Head of caudate nucleus (tissue), 42 donors: ENCODE measurements at regions of chr5 and their contacts with region 1.

Region 1: DNA sequence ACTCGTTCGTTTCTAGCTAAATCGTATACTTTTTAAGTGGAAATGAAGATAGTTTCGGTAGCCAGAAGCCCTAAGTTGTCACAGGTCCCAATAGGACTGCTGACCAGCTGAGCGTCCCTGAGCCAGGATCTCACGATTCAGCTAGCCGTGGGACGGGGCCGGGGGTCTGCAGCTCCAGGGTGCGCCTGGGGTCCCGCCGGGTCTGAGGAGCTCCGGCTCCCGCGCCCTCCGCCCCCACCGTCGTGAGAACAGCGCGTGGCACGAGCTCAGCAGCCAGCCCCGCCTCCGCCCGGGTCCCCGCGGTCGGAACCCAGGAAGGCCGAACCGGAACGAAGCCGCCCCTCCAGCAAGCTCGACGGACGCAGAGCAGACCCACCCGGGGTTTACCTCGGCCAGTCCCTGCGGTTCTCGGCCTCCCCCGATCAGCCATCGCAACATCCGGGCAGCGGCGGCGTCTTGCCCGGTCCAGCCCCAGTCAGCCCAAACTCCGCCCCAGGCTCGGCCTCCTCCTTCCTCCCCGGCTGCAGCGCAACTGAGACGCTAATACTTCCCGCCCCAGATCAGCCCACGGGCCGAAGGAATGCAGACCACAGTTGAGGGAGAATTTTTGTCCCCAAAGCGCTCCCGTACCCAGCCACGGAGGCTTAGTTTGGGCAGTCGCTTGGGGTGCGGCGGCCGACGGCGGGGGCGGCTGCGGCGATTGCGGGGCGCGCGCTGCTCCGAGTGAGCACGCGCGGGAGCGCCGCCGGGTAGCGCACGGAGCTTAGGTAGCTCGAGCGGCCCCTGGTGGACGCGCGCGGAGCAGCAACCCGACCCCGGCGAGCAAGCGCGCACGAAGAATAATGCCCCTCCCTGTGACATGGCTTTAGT is at the start of gene WDR41:
- DNase-seq: peak; percentile 74 to 95 (median 89)

Region 2: GRCh38 chr5:76867827-76868693 is 624.0 kb before region 1 on chr5:
- intact Hi-C with region 1: loop called (anchors 10 kb)
- DNase-seq: peak in 41 of 42 donors; percentile 13 to 88 (median 70)

Region 3: DNA sequence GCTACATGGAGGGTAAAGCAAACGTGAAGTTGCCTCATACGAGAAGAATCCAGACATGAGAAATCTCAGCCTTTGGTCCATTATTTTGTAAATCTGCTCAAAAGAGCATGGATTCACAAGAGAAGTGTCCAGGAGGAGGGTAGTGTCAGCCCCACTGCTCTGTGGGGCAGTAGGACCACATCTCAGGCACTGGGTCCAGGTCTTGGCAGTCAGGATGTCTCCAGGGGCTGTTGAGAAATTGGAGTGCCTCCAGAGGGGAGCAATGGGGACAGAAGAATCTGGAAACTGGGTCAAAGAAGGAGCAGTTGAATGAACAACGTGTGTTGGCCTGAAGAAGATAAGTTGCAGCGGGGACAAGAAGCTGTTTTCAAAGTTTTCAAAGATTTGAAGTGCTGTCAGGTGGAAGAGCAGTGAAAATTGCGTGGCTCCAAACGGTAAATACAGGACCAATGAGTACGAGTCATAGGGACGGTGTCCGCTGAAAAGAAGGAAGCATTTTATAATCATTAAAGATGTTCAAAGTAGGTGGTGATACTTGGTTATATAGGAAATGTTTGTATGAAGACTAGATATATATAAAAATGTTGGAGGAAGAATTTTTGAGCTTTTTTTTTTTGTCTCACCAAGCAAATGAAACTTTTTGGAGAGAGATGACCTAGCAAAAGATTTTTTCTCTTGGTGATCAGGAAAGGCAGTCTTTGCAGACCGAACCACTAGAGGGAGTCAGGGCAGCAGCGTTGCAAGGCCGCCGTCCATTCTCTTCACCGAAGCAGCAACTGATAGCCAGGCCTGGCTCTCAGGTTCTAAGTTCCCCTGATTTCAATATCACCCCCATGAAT is 347.8 kb before region 1 on chr5:
- intact Hi-C with region 1: loop called (anchors 5 kb)
- DNase-seq: peak; percentile 72 to 94 (median 84)

Region 4: DNA sequence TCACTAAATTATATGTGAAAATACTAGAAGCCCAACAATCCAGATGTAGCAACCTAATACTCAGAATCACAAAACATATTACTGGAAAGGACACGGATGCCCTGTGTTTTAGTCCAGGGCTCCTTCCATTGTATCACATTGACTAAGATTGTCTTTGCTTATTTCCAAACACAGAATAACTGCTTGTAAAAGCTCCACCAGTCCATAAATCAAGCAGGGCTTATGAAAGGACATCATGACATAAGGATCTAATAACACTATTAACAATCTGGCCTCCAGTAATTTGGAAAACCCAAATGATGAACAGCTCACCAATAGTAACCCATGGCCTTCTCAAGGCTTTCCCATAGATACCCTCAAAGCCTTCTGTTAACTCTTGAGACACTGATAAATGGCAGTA is 39.7 kb before region 1 on chr5:
- intact Hi-C with region 1: no loop called
- DNase-seq: no peak

Region 5: GRCh38 chr5:77630258-77631089 is 138.5 kb after region 1 on chr5:
- intact Hi-C with region 1: loop called (anchors 10 kb)
- DNase-seq: peak in 21 of 42 donors; percentile 8 to 62 (median 40)